Head of caudate nucleus (tissue), 42 donors: ENCODE measurements at regions of chr10 and their contacts with region 1.

Region 1: DNA sequence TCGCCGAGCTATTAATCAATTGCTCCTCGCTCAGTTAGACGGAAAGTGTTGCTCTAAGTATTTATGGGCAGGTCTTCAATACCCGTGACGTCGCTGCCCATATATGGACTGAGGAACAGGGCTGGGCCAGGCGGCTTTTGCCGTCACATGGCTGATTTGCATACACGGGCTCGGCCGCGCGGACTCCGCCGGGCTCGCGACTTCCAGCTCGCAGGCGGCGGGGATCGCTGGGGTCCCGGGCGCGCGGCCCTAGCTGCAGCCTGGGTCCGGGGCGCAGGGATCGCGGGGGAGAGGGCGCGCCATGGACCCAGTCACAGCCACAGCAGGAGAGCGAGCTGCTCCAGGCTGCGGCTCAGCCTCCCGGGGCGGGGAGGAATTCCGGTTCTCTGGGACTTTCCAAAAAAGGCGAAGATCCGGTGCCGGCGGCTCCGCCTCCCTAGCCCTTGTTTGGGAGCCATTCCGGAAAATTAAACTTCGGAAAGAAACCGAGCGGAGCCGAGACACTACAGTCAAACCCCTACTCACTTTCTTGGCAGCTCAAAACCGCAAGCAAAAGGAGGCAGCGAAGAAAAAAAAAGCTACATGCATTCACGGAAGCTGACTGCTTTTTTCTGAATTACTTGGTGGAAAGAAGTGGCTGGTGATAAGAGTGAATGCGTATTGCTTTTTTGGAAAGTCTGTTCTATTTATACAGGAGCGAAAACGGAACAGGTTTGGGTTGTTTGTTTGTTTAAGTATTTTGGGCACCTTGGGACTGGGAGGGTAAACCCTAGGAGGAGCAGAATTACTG is at the start of gene EGR2:
- DNase-seq: peak; percentile 88 to 99 (median 95)

Region 2: GRCh38 chr10:62610649-62611229 is 205.8 kb before region 1 on chr10:
- intact Hi-C with region 1: loop called (anchors 5 kb)
- DNase-seq: peak; percentile 22 to 85 (median 66)

Region 3: DNA sequence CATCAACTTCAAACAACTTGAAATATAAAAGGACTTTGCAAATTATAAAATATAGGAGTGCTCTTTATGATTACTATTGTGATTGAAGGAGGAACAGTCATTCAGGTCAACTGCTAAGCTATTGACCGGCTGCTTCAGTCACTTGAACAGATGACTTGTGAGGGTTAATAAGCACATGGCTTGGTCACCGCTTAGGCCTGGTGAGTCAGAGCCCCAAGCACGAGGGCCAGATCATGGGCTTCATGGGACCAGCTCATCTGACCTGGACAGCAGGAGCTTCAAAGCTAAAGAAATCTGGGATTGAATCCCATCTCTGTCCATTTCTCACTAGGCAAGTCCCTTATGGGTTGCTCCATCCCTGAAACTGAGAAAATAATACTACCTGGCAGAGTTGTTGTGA is 72.4 kb before region 1 on chr10:
- intact Hi-C with region 1: no loop called
- DNase-seq: no peak

Region 4: GRCh38 chr10:62804356-62805230 is 11.9 kb before region 1 on chr10 and contains the start of gene ADO:
- intact Hi-C with region 1: loop called (anchors 1 kb)
- DNase-seq: peak; percentile 84 to 97 (median 94)